Activated naive CD8-positive, alpha-beta T cell treated with anti-CD3 and anti-CD28 coated beads, Interleukin-2, amount 10 ng/mL, durations not matched to agents 7 days and 5 days (primary cell): ENCODE measurements at regions of chr5 and their contacts with region 1.

Region 1: DNA sequence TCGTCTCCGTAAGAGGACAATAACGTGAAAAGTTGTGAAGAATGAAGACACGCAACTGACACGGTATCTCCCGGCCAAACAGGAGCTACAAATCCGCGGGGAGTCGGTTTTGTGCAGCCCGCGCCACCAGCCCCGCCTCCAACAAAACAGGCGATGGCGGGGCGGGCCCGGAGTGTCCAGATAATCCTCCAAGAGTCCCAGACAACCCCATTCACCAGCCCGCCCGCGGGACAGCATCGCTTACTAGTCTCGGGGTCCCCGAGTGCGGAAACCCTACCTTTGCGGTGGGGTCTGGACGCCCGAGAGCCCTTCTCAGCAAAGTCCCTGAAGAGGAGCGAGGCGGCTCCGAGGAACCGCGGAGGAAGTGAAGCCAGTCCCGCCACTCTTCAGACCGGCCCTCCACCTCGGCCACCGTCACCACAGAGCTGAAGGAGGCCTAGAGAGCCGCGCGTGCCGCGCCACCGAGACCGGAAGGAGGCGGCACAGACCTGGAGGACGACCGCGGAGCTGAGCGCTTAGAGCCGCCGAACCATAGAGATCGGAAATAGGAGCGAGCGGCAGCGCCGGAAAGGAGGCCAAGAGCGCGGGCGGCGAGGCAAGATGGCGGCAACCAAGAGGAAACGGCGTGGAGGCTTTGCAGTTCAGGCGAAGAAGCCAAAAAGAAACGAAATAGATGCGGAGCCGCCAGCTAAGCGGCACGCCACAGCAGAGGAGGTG is at the starts of genes BRIX1 and RAD1:
- DNase-seq: peak; percentile 95
- ATAC-seq: peak; percentile 96
- H3K4me3 Mint-ChIP-seq: no peak within 1 kb of the TSS
- H3K27ac Mint-ChIP-seq: peak within 1 kb of the TSS; percentile 40
- H3K4me1 Mint-ChIP-seq: peaks cover 25% of the 10 kb centered on the region
- H3K27me3 Mint-ChIP-seq: no peaks in the 10 kb centered on the region
- total RNA-seq, gene BRIX1: 32.9 to 33.9 TPM
- total RNA-seq, gene RAD1: 27.6 to 30.6 TPM

Region 2: GRCh38 chr5:34929150-34929719 is 13.9 kb after region 1 on chr5 and contains the start of gene DNAJC21:
- POLR2A ChIA-PET with region 1: interaction called, 108 read pairs
- DNase-seq: peak; percentile 97
- ATAC-seq: peak; percentile 82
- H3K4me3 Mint-ChIP-seq: peak within 1 kb of the TSS; percentile 92
- H3K27ac Mint-ChIP-seq: peak within 1 kb of the TSS; percentile 95
- H3K4me1 Mint-ChIP-seq: peaks cover 27% of the 10 kb centered on the region
- H3K27me3 Mint-ChIP-seq: no peaks in the 10 kb centered on the region
- total RNA-seq, gene DNAJC21: 56.7 to 61.0 TPM